ENCODE measurements at regions of chr6 and their contacts with region 1.

Region 1: GRCh38 chr6:69732640-69733039 is 64.2 kb downstream of the LMBRD1 start:
- DNase-seq: no peak
- H3K4me3 Mint-ChIP-seq: no peak overlapping the region
- H3K27ac Mint-ChIP-seq: no peak overlapping the region
- H3K4me1 Mint-ChIP-seq: no peaks in the 10 kb centered on the region
- H3K27me3 Mint-ChIP-seq: no peaks in the 10 kb centered on the region

Region 2: DNA sequence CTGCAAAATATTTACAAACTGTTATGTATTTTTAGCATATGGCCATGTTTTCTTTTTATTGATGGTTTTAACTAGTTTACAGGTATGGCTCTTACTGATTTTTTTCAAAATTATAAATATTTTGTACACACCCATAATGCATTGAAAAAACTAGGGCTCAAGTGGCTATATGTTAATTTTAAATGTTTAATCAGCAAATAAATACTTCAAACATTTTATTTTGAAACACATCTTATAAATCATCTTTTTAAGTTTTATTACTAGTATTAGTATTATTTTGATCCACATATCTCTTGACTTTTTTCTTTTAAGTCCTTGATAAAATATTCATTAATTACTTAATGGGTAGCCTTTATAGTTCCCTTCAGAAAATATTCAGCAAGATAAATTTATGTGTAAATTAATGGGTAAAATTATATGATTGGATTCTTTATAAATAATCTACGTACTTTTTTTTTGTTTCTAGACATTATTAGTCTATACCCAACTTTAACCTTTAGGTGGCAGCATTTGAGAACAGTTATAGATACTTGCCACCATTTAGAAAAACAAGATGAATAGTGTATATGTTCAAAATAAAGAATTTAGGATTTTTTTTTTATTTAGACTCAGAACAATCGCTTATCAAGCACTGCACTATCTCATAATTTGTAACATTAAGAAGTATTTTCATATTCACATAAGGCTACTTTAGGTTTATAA is 855.7 kb before region 1 on chr6:
- CTCF ChIA-PET with region 1: no interaction called
- intact Hi-C with region 1: loop called (anchors 5 kb)
- DNase-seq: no peak
- H3K4me3 Mint-ChIP-seq: no peak overlapping the region
- H3K27ac Mint-ChIP-seq: no peak overlapping the region
- H3K4me1 Mint-ChIP-seq: no peaks in the 10 kb centered on the region
- H3K27me3 Mint-ChIP-seq: no peaks in the 10 kb centered on the region

Region 3: GRCh38 chr6:69835414-69836179 is 103.0 kb after region 1 on chr6:
- CTCF ChIA-PET with region 1: interaction called, 3 read pairs
- intact Hi-C with region 1: loop called (anchors 1 kb)
- DNase-seq: no peak
- H3K4me3 Mint-ChIP-seq: no peak overlapping the region
- H3K27ac Mint-ChIP-seq: no peak overlapping the region
- H3K4me1 Mint-ChIP-seq: peaks cover 3% of the 10 kb centered on the region
- H3K27me3 Mint-ChIP-seq: peaks cover 5% of the 10 kb centered on the region

Region 4: DNA sequence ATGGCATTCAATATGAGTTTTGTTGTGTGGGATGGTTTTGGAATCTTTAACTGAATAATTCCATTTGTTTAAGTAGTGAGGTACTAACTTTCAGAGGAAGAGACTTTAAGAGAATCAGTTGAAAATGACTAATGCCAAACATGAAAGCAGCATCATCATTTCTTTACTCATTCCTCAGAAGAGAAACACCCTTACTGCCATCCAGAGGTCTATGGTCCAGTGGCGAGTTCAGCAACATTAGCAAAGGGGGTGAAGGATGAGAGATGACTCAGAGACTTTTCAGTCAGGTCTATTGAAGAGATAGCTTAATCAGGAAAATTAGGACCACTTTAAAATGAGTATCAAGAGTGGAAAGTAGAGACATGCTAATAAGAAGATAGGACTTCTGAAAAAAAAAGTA is 252.5 kb after region 1 on chr6:
- CTCF ChIA-PET with region 1: no interaction called
- intact Hi-C with region 1: loop called (anchors 2 kb)
- DNase-seq: no peak
- H3K4me3 Mint-ChIP-seq: no peak overlapping the region
- H3K27ac Mint-ChIP-seq: no peak overlapping the region
- H3K4me1 Mint-ChIP-seq: no peaks in the 10 kb centered on the region
- H3K27me3 Mint-ChIP-seq: peaks cover 2% of the 10 kb centered on the region

Region 5: DNA sequence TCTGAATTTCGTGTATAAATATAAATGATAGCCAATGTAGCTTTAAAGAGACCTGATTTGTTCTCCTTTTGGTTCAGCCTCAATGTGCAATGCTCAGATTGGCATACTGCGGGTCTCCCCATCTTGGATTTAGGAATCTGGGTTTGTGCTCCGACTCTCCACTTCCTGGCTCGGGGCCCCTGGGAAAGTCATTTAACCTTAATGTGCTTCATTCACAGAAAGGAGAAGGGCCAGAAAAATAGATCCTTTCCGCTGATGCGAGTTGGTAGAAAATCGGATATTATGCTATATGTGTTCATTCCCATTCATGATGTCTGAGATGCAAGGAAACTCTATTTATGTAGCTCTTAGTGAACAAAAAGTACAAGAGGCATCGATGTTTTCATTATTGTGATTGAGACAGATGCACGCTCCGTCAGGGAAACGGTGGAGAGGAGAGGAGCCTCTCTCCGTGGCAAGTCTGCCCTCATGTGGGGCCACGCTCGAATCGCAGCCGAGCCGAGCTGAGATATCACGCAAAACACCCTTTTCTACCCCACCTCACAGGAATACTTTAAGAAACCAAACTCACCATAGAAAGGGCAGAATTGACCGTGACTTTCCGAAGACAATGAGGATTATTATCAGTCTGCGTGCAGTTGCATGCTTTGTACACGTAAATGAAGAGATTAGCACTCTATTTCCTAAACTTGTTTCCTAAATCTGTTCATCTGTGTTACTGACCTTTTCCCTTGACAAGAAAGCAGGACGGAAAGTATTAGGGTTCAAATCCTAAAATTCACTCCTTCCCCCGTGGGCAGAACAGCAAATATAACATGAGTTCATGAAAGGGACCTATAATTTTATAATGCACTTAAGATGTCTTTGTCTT is 433.7 kb after region 1 on chr6:
- CTCF ChIA-PET with region 1: no interaction called
- intact Hi-C with region 1: loop called (anchors 1 kb)
- DNase-seq: peak; percentile 56
- H3K4me3 Mint-ChIP-seq: no peak overlapping the region
- H3K27ac Mint-ChIP-seq: no peak overlapping the region
- H3K4me1 Mint-ChIP-seq: no peaks in the 10 kb centered on the region
- H3K27me3 Mint-ChIP-seq: peaks cover 29% of the 10 kb centered on the region

Measured in activated naive CD4-positive, alpha-beta T cell treated with anti-CD3 and anti-CD28 coated beads for 36 hours (primary cell).